MCF 10A (cell line): ENCODE measurements at regions of chr7 and their contacts with region 1.

Region 1: DNA sequence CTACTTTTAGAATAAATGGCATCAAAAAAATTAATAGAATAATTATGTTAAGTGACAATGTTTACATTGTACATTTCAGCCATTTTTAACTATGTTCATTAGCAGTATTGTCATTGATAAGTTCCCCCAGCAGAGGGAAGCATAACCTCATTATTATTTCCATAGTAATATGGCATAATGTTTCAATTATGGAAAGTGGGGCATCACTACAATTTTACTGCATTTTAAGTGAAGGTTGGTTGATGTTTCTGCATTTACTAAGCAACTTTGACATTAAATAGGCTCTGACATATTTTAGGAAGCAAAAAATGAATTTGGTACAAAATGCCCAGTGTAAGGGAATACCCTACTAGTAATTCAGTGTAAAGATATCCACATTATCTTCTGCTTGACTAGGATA is 218.3 kb downstream of the SEMA3A start:
- DNase-seq: peak; percentile 54
- H3K4me3 Mint-ChIP-seq: no peak overlapping the region
- H3K27ac Mint-ChIP-seq: no peak overlapping the region
- H3K4me1 Mint-ChIP-seq: no peaks in the 10 kb centered on the region
- H3K27me3 Mint-ChIP-seq: no peaks in the 10 kb centered on the region
- CTCF ChIP-seq: peak; percentile 55

Region 2: DNA sequence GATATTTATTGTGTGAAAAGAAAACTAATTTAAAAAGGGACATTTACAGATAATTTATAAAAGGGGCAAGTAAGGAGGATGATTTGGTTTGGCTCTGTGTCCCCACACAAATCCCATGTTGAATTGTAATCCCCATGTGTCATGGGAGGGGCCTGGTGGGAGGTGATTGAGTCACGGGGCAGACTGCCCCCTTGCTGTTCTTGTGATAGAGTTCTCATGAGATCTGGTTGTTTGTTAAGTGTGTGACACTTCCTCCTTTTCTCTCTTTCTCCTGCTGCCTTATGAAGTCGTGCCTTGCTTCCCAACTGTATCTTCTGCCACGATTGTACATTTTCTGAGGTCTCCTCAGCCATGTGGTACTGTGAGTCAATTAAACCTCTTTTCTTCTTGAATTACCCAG is 156.4 kb before region 1 on chr7:
- CTCF ChIA-PET with region 1: no interaction called
- POLR2A ChIA-PET with region 1: no interaction called
- intact Hi-C with region 1: no loop called
- DNase-seq: no peak
- H3K4me3 Mint-ChIP-seq: no peak overlapping the region
- H3K27ac Mint-ChIP-seq: no peak overlapping the region
- H3K4me1 Mint-ChIP-seq: no peaks in the 10 kb centered on the region
- H3K27me3 Mint-ChIP-seq: peaks cover 38% of the 10 kb centered on the region
- CTCF ChIP-seq: no peak

Region 3: GRCh38 chr7:83918142-83918541 is 58.2 kb before region 1 on chr7:
- CTCF ChIA-PET with region 1: no interaction called
- POLR2A ChIA-PET with region 1: no interaction called
- intact Hi-C with region 1: no loop called
- DNase-seq: no peak
- H3K4me3 Mint-ChIP-seq: no peak overlapping the region
- H3K27ac Mint-ChIP-seq: no peak overlapping the region
- H3K4me1 Mint-ChIP-seq: no peaks in the 10 kb centered on the region
- H3K27me3 Mint-ChIP-seq: peaks cover 45% of the 10 kb centered on the region
- CTCF ChIP-seq: no peak

Region 4: GRCh38 chr7:84188786-84189405 is 212.6 kb after region 1 on chr7:
- CTCF ChIA-PET with region 1: interaction called, 5 read pairs
- POLR2A ChIA-PET with region 1: no interaction called
- intact Hi-C with region 1: loop called (anchors 1 kb)
- DNase-seq: peak; percentile 56
- H3K4me3 Mint-ChIP-seq: no peak overlapping the region
- H3K27ac Mint-ChIP-seq: no peak overlapping the region
- H3K4me1 Mint-ChIP-seq: peaks cover 16% of the 10 kb centered on the region
- H3K27me3 Mint-ChIP-seq: no peaks in the 10 kb centered on the region
- CTCF ChIP-seq: peak; percentile 32

Region 5: DNA sequence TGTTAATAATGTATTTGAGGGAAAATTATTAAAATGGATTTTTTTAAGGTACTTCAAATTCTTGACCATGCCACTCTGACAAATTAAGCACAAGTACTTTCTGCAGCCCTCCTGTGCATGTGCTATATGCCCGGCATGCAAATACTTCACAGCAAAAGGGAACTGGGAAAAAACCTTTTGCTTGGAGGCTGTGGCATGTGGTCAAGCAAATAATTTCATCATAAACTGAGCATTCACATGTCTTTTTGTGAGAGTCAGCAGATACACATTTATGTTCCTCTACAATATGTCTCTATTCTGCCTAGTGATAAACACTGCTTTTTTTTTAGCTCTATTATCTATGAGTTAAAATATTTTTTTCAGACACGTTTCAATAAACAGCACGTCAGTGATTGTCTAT is 272.0 kb after region 1 on chr7:
- CTCF ChIA-PET with region 1: no interaction called
- POLR2A ChIA-PET with region 1: no interaction called
- intact Hi-C with region 1: loop called (anchors 5 kb)
- DNase-seq: no peak
- H3K4me3 Mint-ChIP-seq: no peak overlapping the region
- H3K27ac Mint-ChIP-seq: no peak overlapping the region
- H3K4me1 Mint-ChIP-seq: no peaks in the 10 kb centered on the region
- H3K27me3 Mint-ChIP-seq: no peaks in the 10 kb centered on the region
- CTCF ChIP-seq: no peak

Region 6: DNA sequence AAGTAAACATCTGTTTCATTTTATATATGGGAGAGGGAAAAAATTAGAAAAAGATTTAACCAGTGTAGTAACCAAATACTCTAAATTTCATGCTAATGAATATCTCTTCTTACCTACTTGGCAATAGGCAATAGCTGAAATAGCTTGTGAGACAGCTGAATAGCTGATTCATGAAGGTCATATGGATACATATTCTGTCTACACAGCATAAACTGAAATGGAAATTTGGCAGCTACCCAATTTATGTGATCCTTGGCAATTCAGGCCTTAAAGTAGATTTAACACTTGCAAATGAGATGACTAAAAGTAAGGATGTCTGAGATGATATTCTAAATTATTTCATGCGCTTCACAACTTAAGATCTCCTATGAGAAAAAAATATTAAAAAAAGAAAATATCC is 479.5 kb after region 1 on chr7:
- CTCF ChIA-PET with region 1: interaction called, 3 read pairs
- POLR2A ChIA-PET with region 1: no interaction called
- intact Hi-C with region 1: loop called (anchors 1 kb)
- DNase-seq: peak; percentile 20
- H3K4me3 Mint-ChIP-seq: no peak overlapping the region
- H3K27ac Mint-ChIP-seq: no peak overlapping the region
- H3K4me1 Mint-ChIP-seq: no peaks in the 10 kb centered on the region
- H3K27me3 Mint-ChIP-seq: no peaks in the 10 kb centered on the region
- CTCF ChIP-seq: no peak

Region 7: GRCh38 chr7:84614821-84615505 is 638.7 kb after region 1 on chr7:
- CTCF ChIA-PET with region 1: no interaction called
- POLR2A ChIA-PET with region 1: no interaction called
- intact Hi-C with region 1: loop called (anchors 5 kb)
- DNase-seq: peak; percentile 22
- H3K4me3 Mint-ChIP-seq: no peak overlapping the region
- H3K27ac Mint-ChIP-seq: no peak overlapping the region
- H3K4me1 Mint-ChIP-seq: no peaks in the 10 kb centered on the region
- H3K27me3 Mint-ChIP-seq: no peaks in the 10 kb centered on the region
- CTCF ChIP-seq: peak; percentile 20

Region 8: GRCh38 chr7:84953037-84953650 is 976.8 kb after region 1 on chr7:
- CTCF ChIA-PET with region 1: no interaction called
- POLR2A ChIA-PET with region 1: no interaction called
- intact Hi-C with region 1: no loop called
- DNase-seq: no peak
- H3K4me3 Mint-ChIP-seq: no peak overlapping the region
- H3K27ac Mint-ChIP-seq: no peak overlapping the region
- H3K4me1 Mint-ChIP-seq: no peaks in the 10 kb centered on the region
- H3K27me3 Mint-ChIP-seq: no peaks in the 10 kb centered on the region
- CTCF ChIP-seq: no peak